Mammary epithelial cell (primary cell): ENCODE measurements at regions of chr9 and their contacts with region 1.

Region 1: DNA sequence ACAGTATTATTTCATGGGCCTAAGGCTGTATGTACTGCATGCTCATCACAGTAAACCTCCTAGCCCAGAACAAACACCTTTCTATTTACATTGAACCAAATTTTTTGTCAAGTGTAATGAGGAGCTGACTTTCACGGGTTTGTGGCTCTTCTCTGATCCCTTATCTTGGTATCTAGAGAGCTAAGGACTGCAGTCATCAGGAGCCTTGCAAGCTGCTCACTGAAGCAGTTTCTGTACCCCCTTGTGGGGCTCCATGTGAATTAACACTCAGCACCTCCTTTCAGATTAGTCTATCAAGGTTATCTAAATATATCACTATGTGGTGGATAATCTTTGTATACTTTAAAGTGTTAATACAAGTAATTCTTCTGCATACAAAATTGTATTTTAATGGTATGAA is 108.2 kb downstream of the AUH start:
- DNase-seq: peak; percentile 9
- H3K4me3 ChIP-seq: no peak overlapping the region
- H3K27ac ChIP-seq: no peak overlapping the region
- H3K4me1 ChIP-seq: no peaks in the 10 kb centered on the region
- H3K27me3 ChIP-seq: no peaks in the 10 kb centered on the region
- CTCF ChIP-seq: peak in 1 of 2 donors; percentile 10

Region 2: GRCh38 chr9:91089405-91090129 is 163.9 kb before region 1 on chr9:
- CTCF ChIA-PET with region 1: no interaction called
- dilution Hi-C with region 1: no loop called
- in situ Hi-C with region 1: no loop called
- intact Hi-C with region 1: loop called (anchors 5 kb)
- DNase-seq: peak; percentile 29
- H3K4me3 ChIP-seq: no peak overlapping the region
- H3K27ac ChIP-seq: no peak overlapping the region
- H3K4me1 ChIP-seq: no peaks in the 10 kb centered on the region
- H3K27me3 ChIP-seq: no peaks in the 10 kb centered on the region
- CTCF ChIP-seq: peak; percentile 39 to 67

Region 3: GRCh38 chr9:91211919-91212318 is 41.6 kb before region 1 on chr9:
- CTCF ChIA-PET with region 1: no interaction called
- dilution Hi-C with region 1: no loop called
- in situ Hi-C with region 1: no loop called
- intact Hi-C with region 1: no loop called
- DNase-seq: no peak
- H3K4me3 ChIP-seq: no peak overlapping the region
- H3K27ac ChIP-seq: no peak overlapping the region
- H3K4me1 ChIP-seq: peaks cover 9% of the 10 kb centered on the region
- H3K27me3 ChIP-seq: no peaks in the 10 kb centered on the region
- CTCF ChIP-seq: no peak

Region 4: DNA sequence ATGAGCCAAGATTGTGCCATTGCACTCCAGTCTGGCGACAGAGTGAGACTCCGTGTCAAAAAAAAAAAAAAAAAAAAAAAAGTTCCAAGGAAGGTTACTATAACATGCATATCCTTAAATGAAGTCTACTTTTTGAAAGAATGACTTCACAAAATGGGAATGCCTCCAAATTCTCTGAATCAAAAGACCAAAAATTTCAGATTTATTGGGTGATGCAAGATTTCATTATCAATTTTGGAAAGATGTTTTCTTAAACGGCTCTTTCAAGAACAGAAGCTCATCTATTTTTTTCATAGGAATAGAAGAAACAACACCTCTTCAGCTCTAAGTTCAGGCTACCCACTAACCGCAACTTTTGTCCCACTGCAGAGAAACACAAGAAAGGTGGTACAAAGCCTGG is 38.4 kb after region 1 on chr9:
- CTCF ChIA-PET with region 1: no interaction called
- dilution Hi-C with region 1: loop called (anchors 5 kb)
- in situ Hi-C with region 1: no loop called
- intact Hi-C with region 1: no loop called
- DNase-seq: no peak
- H3K4me3 ChIP-seq: no peak overlapping the region
- H3K27ac ChIP-seq: no peak overlapping the region
- H3K4me1 ChIP-seq: no peaks in the 10 kb centered on the region
- H3K27me3 ChIP-seq: no peaks in the 10 kb centered on the region
- CTCF ChIP-seq: no peak